Posterior vena cava (tissue), 2 donors: ENCODE measurements at regions of chr22 and their contacts with region 1.

Region 1: DNA sequence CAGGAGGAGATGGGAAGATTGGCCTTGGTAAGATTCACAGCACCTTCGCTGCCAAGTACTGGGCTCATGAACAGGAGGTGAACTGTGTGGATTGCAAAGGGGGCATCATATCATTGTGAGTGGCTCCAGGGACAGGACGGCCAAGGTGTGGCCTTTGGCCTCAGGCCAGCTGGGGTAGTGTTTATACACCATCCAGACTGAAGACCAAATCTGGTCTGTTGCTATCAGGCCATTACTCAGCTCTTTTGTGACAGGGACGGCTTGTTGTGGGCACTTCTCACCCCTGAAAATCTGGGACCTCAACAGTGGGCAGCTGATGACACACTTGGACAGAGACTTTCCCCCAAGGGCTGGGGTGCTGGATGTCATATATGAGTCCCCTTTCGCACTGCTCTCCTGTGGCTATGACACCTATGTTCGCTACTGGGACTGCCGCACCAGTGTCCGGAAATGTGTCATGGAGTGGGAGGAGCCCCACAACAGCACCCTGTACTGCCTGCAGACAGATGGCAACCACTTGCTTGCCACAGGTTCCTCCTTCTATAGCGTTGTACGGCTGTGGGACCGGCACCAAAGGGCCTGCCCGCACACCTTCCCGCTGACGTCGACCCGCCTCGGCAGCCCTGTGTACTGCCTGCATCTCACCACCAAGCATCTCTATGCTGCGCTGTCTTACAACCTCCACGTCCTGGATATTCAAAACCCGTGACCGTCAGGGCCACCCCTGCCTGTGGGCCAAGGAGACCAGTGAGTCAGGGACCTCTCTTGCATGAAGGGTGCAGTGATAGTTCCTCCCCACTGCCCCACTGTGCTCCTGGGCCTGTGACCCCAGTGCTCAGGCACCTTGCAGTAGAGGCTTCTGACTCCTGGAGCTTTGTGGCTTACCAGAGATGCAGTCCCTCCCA is 83.6 kb downstream of the BCR start:
- DNase-seq: no peak

Region 2: DNA sequence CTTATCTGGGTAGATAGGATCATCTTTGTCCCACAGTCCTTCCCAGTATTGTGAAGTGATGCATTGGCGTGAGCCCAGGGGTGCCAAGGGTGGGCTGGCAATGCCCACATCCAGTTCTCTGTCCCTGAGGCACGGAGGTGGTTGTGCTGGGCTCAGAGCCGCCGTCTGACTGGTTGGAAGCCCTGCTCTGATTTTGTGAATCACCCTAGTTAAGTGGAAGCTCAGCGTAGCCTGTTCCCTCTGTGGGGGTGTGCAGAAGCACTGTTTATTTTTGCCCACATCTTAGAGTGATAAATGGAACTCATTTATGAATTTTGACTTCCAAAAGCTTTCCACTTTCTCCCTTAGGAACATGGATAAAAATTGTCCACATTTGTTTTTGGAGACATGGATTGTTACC is 70.0 kb before region 1 on chr22:
- intact Hi-C with region 1: no loop called
- DNase-seq: no peak

Region 3: DNA sequence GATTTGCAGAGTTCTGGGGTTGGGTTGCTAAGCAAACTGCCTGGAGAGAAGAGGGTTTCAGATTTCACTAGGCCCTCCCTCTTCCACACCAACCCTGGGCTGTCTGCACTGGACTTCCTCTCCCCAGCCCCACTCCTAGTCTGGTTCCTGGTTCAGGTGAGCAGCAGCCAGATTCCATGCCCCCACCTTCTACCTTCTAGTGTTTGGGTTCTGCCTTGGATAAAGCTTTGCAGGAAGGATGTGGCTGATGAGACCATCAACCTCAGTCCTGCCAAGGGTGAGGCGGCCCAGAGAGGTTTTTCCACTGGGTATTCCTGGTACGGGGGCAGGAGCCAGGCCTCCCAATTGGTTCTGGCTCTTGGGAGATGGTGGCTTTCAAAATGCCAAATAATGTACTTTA is 15.3 kb before region 1 on chr22:
- intact Hi-C with region 1: loop called in 1 of 2 experiments (anchors 1 kb)
- DNase-seq: no peak